MCF 10A (cell line): ENCODE measurements at regions of chrX and their contacts with region 1.

Region 1: GRCh38 chrX:131763674-131764073 is 219.8 kb downstream of the OR13H1 start:
- DNase-seq: peak; percentile 90
- H3K4me3 Mint-ChIP-seq: peak overlapping the region; percentile 65
- H3K27ac Mint-ChIP-seq: no peak overlapping the region
- H3K4me1 Mint-ChIP-seq: peaks cover 5% of the 10 kb centered on the region
- H3K27me3 Mint-ChIP-seq: no peaks in the 10 kb centered on the region
- CTCF ChIP-seq: peak; percentile 49

Region 2: GRCh38 chrX:131634900-131635299 is 128.8 kb before region 1 on chrX:
- CTCF ChIA-PET with region 1: no interaction called
- POLR2A ChIA-PET with region 1: no interaction called
- intact Hi-C with region 1: no loop called
- DNase-seq: no peak
- H3K4me3 Mint-ChIP-seq: no peak overlapping the region
- H3K27ac Mint-ChIP-seq: no peak overlapping the region
- H3K4me1 Mint-ChIP-seq: no peaks in the 10 kb centered on the region
- H3K27me3 Mint-ChIP-seq: peaks cover 13% of the 10 kb centered on the region
- CTCF ChIP-seq: no peak

Region 3: GRCh38 chrX:131704136-131704695 is 59.5 kb before region 1 on chrX:
- CTCF ChIA-PET with region 1: interaction called, 10 read pairs
- POLR2A ChIA-PET with region 1: interaction called, 3 read pairs
- intact Hi-C with region 1: no loop called
- DNase-seq: peak; percentile 96
- H3K4me3 Mint-ChIP-seq: peak overlapping the region; percentile 77
- H3K27ac Mint-ChIP-seq: peak overlapping the region; percentile 20
- H3K4me1 Mint-ChIP-seq: no peaks in the 10 kb centered on the region
- H3K27me3 Mint-ChIP-seq: no peaks in the 10 kb centered on the region
- CTCF ChIP-seq: peak; percentile 87

Region 4: GRCh38 chrX:131728295-131729145 is 35.2 kb before region 1 on chrX:
- CTCF ChIA-PET with region 1: interaction called, 3 read pairs
- POLR2A ChIA-PET with region 1: no interaction called
- intact Hi-C with region 1: loop called (anchors 1 kb)
- DNase-seq: peak; percentile 93
- H3K4me3 Mint-ChIP-seq: peak overlapping the region; percentile 85
- H3K27ac Mint-ChIP-seq: peak overlapping the region; percentile 98
- H3K4me1 Mint-ChIP-seq: no peaks in the 10 kb centered on the region
- H3K27me3 Mint-ChIP-seq: no peaks in the 10 kb centered on the region
- CTCF ChIP-seq: peak; percentile 52

Region 5: GRCh38 chrX:131752489-131753198 is 11.0 kb before region 1 on chrX:
- CTCF ChIA-PET with region 1: interaction called, 5 read pairs
- POLR2A ChIA-PET with region 1: interaction called, 20 read pairs
- intact Hi-C with region 1: loop called (anchors 1 kb)
- DNase-seq: peak; percentile 93
- H3K4me3 Mint-ChIP-seq: peak overlapping the region; percentile 72
- H3K27ac Mint-ChIP-seq: peak overlapping the region; percentile 61
- H3K4me1 Mint-ChIP-seq: peaks cover under 1% of the 10 kb centered on the region
- H3K27me3 Mint-ChIP-seq: no peaks in the 10 kb centered on the region
- CTCF ChIP-seq: no peak

Region 6: DNA sequence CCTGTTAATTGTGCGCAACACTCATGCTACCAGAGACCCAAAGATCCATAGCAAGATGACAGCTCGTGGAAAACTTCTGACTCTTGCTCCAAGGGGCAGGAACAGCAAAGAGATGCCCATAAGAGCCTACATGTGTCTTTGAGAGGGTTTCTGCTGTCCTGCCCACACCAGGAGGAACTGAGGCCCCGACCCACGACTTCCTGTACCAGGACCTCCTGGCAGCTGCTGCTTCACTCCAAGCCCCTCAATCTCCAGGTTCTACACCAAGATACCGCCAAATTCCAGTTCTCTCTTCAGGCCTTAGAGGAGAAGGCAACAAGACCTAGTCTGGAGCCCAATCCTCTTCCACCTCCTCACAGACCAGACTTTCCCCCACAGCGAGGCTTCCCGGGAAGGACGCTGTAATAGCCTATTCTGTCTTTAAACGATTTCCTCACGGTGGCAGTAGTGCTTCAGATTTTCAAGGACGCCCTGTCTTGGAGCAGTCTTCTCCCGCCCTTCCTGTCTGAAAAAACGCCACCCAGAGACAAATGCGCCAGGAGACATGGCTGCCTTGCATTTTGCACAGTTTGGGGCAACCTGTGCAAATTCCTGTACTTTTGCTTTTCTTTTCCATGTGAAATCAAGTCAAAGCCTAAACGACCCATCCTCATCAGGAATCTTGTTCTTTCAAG is 29.3 kb after region 1 on chrX:
- CTCF ChIA-PET with region 1: interaction called, 4 read pairs
- POLR2A ChIA-PET with region 1: interaction called, 7 read pairs
- intact Hi-C with region 1: loop called (anchors 1 kb)
- DNase-seq: peak; percentile 94
- H3K4me3 Mint-ChIP-seq: peak overlapping the region; percentile 72
- H3K27ac Mint-ChIP-seq: peak overlapping the region; percentile 80
- H3K4me1 Mint-ChIP-seq: peaks cover 4% of the 10 kb centered on the region
- H3K27me3 Mint-ChIP-seq: peaks cover 37% of the 10 kb centered on the region
- CTCF ChIP-seq: peak; percentile 49